Natural killer cell (primary cell): ENCODE measurements at regions of chr22 and their contacts with region 1.

Region 1: GRCh38 chr22:39236321-39237317 is 8.2 kb downstream of the PDGFB start:
- DNase-seq: peak; percentile 47 to 84
- ATAC-seq: peak; percentile 56 to 78 (median 57)
- H3K4me3 ChIP-seq: no peak overlapping the region
- H3K4me3 Mint-ChIP-seq: peak overlapping the region; percentile 87
- H3K27ac ChIP-seq: no peak overlapping the region
- H3K27ac Mint-ChIP-seq: peak overlapping the region; percentile 45 to 69
- H3K4me1 ChIP-seq: peaks cover 58% of the 10 kb centered on the region
- H3K4me1 Mint-ChIP-seq: peaks cover 40 to 65% of the 10 kb centered on the region in 2 donors
- H3K27me3 ChIP-seq: peaks cover 52% of the 10 kb centered on the region
- H3K27me3 Mint-ChIP-seq: peaks cover 55 to 72% of the 10 kb centered on the region in 2 donors
- CTCF ChIP-seq: no peak

Region 2: GRCh38 chr22:39277155-39277607 is 40.6 kb after region 1 on chr22:
- intact Hi-C with region 1: loop called (anchors 5 kb)
- DNase-seq: no peak
- ATAC-seq: no peak
- H3K4me3 ChIP-seq: no peak overlapping the region
- H3K4me3 Mint-ChIP-seq: no peak overlapping the region
- H3K27ac ChIP-seq: no peak overlapping the region
- H3K27ac Mint-ChIP-seq: no peak overlapping the region
- H3K4me1 ChIP-seq: peaks cover 8% of the 10 kb centered on the region
- H3K4me1 Mint-ChIP-seq: peaks cover 0 to 6% of the 10 kb centered on the region in 2 donors
- H3K27me3 ChIP-seq: no peaks in the 10 kb centered on the region
- H3K27me3 Mint-ChIP-seq: peaks cover 0 to 22% of the 10 kb centered on the region in 2 donors
- CTCF ChIP-seq: no peak